ENCODE measurements at regions of chr2 and their contacts with region 1.

Region 1: GRCh38 chr2:74391580-74392448 is 11.7 kb upstream of the DCTN1 start:
- DNase-seq: peak; percentile 90 to 94
- H3K4me3 ChIP-seq: peak overlapping the region; percentile 77
- H3K4me3 Mint-ChIP-seq: peak overlapping the region; percentile 81
- H3K27ac Mint-ChIP-seq: peak overlapping the region; percentile 92
- H3K4me1 ChIP-seq: peaks cover 7% of the 10 kb centered on the region; the same call in 1 of the 2 replicates
- H3K4me1 Mint-ChIP-seq: peaks cover 6% of the 10 kb centered on the region
- H3K27me3 ChIP-seq: no peaks in the 10 kb centered on the region
- H3K27me3 Mint-ChIP-seq: peaks cover 3% of the 10 kb centered on the region
- CTCF ChIP-seq: peak; percentile 95

Region 2: GRCh38 chr2:74250189-74250631 is 141.6 kb before region 1 on chr2:
- CTCF ChIA-PET with region 1: interaction called, 3 read pairs
- POLR2A ChIA-PET with region 1: no interaction called
- intact Hi-C with region 1: loop called (anchors 5 kb)
- DNase-seq: peak; percentile 44 to 55
- H3K4me3 ChIP-seq: no peak overlapping the region
- H3K4me3 Mint-ChIP-seq: no peak overlapping the region
- H3K27ac Mint-ChIP-seq: no peak overlapping the region
- H3K4me1 ChIP-seq: no peaks in the 10 kb centered on the region
- H3K4me1 Mint-ChIP-seq: no peaks in the 10 kb centered on the region
- H3K27me3 ChIP-seq: no peaks in the 10 kb centered on the region
- H3K27me3 Mint-ChIP-seq: no peaks in the 10 kb centered on the region
- CTCF ChIP-seq: peak; percentile 85 to 86

Region 3: DNA sequence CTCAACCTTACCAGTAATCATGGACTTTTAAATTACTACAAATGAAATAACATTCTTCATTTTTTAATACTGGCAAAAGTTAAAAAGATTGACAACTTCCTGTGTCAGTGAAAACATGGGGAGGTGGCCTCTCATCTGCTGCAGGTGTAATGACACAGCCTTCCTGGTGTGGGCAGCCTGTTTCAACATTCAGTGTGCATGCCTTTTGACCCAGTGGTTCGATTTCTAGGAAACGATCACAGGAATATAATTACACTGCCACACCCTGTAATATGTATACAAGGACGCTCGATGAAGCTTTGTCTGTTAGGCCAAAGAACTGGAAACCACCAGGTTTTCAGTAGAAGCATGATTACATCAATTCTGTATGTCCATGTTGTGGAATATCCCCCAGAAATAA is 124.7 kb before region 1 on chr2:
- CTCF ChIA-PET with region 1: no interaction called
- POLR2A ChIA-PET with region 1: no interaction called
- intact Hi-C with region 1: loop called (anchors 2 kb)
- DNase-seq: peak in 1 of 2 experiments; percentile 62
- H3K4me3 ChIP-seq: no peak overlapping the region
- H3K4me3 Mint-ChIP-seq: no peak overlapping the region
- H3K27ac Mint-ChIP-seq: no peak overlapping the region
- H3K4me1 ChIP-seq: no peaks in the 10 kb centered on the region
- H3K4me1 Mint-ChIP-seq: no peaks in the 10 kb centered on the region
- H3K27me3 ChIP-seq: no peaks in the 10 kb centered on the region
- H3K27me3 Mint-ChIP-seq: no peaks in the 10 kb centered on the region
- CTCF ChIP-seq: peak; percentile 47 to 75

Region 4: DNA sequence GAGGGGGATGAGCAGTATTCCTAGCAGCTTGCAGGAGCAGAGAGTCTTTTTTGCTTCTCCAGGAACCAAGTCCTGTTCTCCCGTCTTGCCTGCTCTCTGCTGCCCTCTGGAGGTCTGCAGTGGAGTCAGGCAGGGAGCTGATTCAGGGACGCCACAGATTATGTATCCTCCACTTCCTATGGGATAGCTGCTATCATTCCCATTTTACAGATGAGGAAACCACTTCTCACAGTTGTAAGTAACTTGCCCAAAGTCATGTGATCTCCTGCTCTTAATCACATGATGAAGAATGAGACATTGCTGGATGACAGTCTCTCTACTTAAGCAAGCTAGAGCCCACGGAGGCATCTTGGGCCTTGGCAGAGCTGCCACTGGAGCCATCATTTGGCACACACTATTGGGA is 56.9 kb before region 1 on chr2:
- CTCF ChIA-PET with region 1: interaction called, 17 read pairs
- POLR2A ChIA-PET with region 1: no interaction called
- intact Hi-C with region 1: no loop called
- DNase-seq: peak; percentile 79 to 85
- H3K4me3 ChIP-seq: no peak overlapping the region
- H3K4me3 Mint-ChIP-seq: no peak overlapping the region
- H3K27ac Mint-ChIP-seq: no peak overlapping the region
- H3K4me1 ChIP-seq: no peaks in the 10 kb centered on the region
- H3K4me1 Mint-ChIP-seq: no peaks in the 10 kb centered on the region
- H3K27me3 ChIP-seq: no peaks in the 10 kb centered on the region
- H3K27me3 Mint-ChIP-seq: no peaks in the 10 kb centered on the region
- CTCF ChIP-seq: peak; percentile 97

Measured in Caco-2 (cell line).